Activated CD4-positive, alpha-beta T cell treated with anti-CD3 and anti-CD28 coated beads for 36 hours (primary cell): ENCODE measurements at regions of chr3 and their contacts with region 1.

Region 1: GRCh38 chr3:39288300-39288808 is 8.5 kb upstream of the CX3CR1 start:
- DNase-seq: peak; percentile 90
- ATAC-seq: peak; percentile 96
- H3K4me3 Mint-ChIP-seq: no peak overlapping the region
- H3K27ac Mint-ChIP-seq: no peak overlapping the region
- H3K4me1 Mint-ChIP-seq: peaks cover 13% of the 10 kb centered on the region
- H3K27me3 Mint-ChIP-seq: no peaks in the 10 kb centered on the region

Region 2: GRCh38 chr3:38805765-38806386 is 482.5 kb before region 1 on chr3:
- CTCF ChIA-PET with region 1: no interaction called
- POLR2A ChIA-PET with region 1: no interaction called
- intact Hi-C with region 1: no loop called
- DNase-seq: peak; percentile 73
- ATAC-seq: peak; percentile 51
- H3K4me3 Mint-ChIP-seq: no peak overlapping the region
- H3K27ac Mint-ChIP-seq: no peak overlapping the region
- H3K4me1 Mint-ChIP-seq: no peaks in the 10 kb centered on the region
- H3K27me3 Mint-ChIP-seq: peaks cover 7% of the 10 kb centered on the region

Region 3: GRCh38 chr3:39000008-39000450 is 288.3 kb before region 1 on chr3:
- CTCF ChIA-PET with region 1: interaction called, 11 read pairs
- POLR2A ChIA-PET with region 1: no interaction called
- intact Hi-C with region 1: no loop called
- DNase-seq: no peak
- ATAC-seq: peak; percentile 71
- H3K4me3 Mint-ChIP-seq: no peak overlapping the region
- H3K27ac Mint-ChIP-seq: no peak overlapping the region
- H3K4me1 Mint-ChIP-seq: no peaks in the 10 kb centered on the region
- H3K27me3 Mint-ChIP-seq: no peaks in the 10 kb centered on the region

Region 4: GRCh38 chr3:39107388-39108199 is 180.8 kb before region 1 on chr3 and contains the starts of genes GORASP1 and TTC21A:
- CTCF ChIA-PET with region 1: interaction called, 29 read pairs
- POLR2A ChIA-PET with region 1: no interaction called
- intact Hi-C with region 1: no loop called
- DNase-seq: peak; percentile 80
- ATAC-seq: peak; percentile 70
- H3K4me3 Mint-ChIP-seq: peak within 1 kb of the TSS; percentile 83
- H3K27ac Mint-ChIP-seq: peak within 1 kb of the TSS; percentile 77
- H3K4me1 Mint-ChIP-seq: peaks cover 36% of the 10 kb centered on the region
- H3K27me3 Mint-ChIP-seq: no peaks in the 10 kb centered on the region
- total RNA-seq, gene GORASP1: 23.0 to 23.8 TPM
- total RNA-seq, gene TTC21A: 1.8 to 2.3 TPM

Region 5: DNA sequence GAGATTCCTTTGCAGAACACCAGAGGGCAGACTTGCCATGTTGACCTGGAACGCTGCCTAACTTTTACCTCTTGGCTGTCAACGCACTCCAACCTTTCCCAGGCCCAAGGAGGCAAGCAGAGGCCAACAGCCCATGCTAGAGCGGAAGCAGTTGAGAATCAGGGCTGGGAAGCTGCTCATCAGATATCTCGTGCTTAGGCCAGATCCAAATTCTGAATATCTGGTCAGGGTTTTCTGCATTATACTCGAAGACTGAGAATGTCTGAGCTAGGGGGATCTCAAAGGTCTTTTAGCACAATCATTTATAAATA is 98.4 kb before region 1 on chr3:
- CTCF ChIA-PET with region 1: interaction called, 447 read pairs
- POLR2A ChIA-PET with region 1: interaction called, 6 read pairs
- intact Hi-C with region 1: loop called (anchors 1 kb)
- DNase-seq: peak; percentile 72
- ATAC-seq: peak; percentile 64
- H3K4me3 Mint-ChIP-seq: no peak overlapping the region
- H3K27ac Mint-ChIP-seq: no peak overlapping the region
- H3K4me1 Mint-ChIP-seq: peaks cover 28% of the 10 kb centered on the region
- H3K27me3 Mint-ChIP-seq: no peaks in the 10 kb centered on the region

Region 6: GRCh38 chr3:39249453-39250115 is 38.8 kb before region 1 on chr3:
- CTCF ChIA-PET with region 1: interaction called, 12 read pairs
- POLR2A ChIA-PET with region 1: no interaction called
- intact Hi-C with region 1: no loop called
- DNase-seq: no peak
- ATAC-seq: peak; percentile 12
- H3K4me3 Mint-ChIP-seq: no peak overlapping the region
- H3K27ac Mint-ChIP-seq: no peak overlapping the region
- H3K4me1 Mint-ChIP-seq: peaks cover 6% of the 10 kb centered on the region
- H3K27me3 Mint-ChIP-seq: no peaks in the 10 kb centered on the region

Region 7: GRCh38 chr3:39267631-39268548 is 20.5 kb before region 1 on chr3:
- CTCF ChIA-PET with region 1: interaction called, 32 read pairs
- POLR2A ChIA-PET with region 1: interaction called, 3 read pairs
- intact Hi-C with region 1: no loop called
- DNase-seq: peak; percentile 84
- ATAC-seq: peak; percentile 88
- H3K4me3 Mint-ChIP-seq: peak overlapping the region; percentile 39
- H3K27ac Mint-ChIP-seq: peak overlapping the region; percentile 94
- H3K4me1 Mint-ChIP-seq: peaks cover 26% of the 10 kb centered on the region
- H3K27me3 Mint-ChIP-seq: no peaks in the 10 kb centered on the region

Region 8: DNA sequence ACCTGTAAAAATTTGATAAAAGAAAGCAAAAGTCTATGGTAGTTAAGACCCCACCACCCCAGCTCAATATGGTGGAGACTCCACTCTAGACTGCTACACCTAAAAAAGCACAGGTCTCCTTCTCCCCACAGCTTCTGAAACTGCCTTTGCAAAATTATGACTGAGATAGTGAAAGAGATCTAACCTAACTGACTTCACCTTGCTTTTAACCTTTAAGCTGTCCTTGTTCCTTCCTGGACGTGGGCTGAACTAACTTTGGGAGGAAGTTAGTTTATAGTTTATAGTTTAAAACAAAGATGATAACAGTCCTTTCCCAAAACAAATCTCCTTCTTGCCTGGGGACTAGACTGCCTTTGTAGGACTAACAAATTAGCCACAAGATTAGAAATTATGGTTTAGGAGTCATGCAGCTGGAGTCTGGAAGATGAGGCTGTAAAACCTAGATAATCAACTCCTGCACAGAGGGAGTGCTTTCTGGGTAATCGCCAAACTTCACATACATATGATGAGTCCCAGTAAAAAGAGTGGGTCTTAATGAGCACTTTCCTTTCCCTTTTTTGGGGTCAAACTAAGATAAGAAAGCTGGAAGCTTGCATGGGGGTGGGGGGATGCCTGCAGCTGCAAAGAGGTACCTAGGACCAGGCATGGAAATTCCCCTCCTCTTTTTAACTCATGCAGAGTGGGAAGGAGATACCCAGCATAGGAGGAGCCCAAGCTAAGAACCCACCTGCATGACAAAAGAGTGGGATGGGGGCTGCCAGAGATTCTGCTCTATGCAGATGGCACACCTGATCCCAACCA is 58.6 kb after region 1 on chr3:
- CTCF ChIA-PET with region 1: interaction called, 15 read pairs
- POLR2A ChIA-PET with region 1: no interaction called
- intact Hi-C with region 1: no loop called
- DNase-seq: no peak
- ATAC-seq: peak; percentile 91
- H3K4me3 Mint-ChIP-seq: no peak overlapping the region
- H3K27ac Mint-ChIP-seq: peak overlapping the region; percentile 32
- H3K4me1 Mint-ChIP-seq: peaks cover 33% of the 10 kb centered on the region
- H3K27me3 Mint-ChIP-seq: no peaks in the 10 kb centered on the region

Region 9: GRCh38 chr3:40044487-40044886 is 756.1 kb after region 1 on chr3:
- CTCF ChIA-PET with region 1: no interaction called
- POLR2A ChIA-PET with region 1: no interaction called
- intact Hi-C with region 1: no loop called
- DNase-seq: no peak
- ATAC-seq: no peak
- H3K4me3 Mint-ChIP-seq: no peak overlapping the region
- H3K27ac Mint-ChIP-seq: no peak overlapping the region
- H3K4me1 Mint-ChIP-seq: no peaks in the 10 kb centered on the region
- H3K27me3 Mint-ChIP-seq: no peaks in the 10 kb centered on the region